Left ventricle myocardium inferior (tissue), 1 donor: ENCODE measurements at regions of chr19 and their contacts with region 1.

Region 1: DNA sequence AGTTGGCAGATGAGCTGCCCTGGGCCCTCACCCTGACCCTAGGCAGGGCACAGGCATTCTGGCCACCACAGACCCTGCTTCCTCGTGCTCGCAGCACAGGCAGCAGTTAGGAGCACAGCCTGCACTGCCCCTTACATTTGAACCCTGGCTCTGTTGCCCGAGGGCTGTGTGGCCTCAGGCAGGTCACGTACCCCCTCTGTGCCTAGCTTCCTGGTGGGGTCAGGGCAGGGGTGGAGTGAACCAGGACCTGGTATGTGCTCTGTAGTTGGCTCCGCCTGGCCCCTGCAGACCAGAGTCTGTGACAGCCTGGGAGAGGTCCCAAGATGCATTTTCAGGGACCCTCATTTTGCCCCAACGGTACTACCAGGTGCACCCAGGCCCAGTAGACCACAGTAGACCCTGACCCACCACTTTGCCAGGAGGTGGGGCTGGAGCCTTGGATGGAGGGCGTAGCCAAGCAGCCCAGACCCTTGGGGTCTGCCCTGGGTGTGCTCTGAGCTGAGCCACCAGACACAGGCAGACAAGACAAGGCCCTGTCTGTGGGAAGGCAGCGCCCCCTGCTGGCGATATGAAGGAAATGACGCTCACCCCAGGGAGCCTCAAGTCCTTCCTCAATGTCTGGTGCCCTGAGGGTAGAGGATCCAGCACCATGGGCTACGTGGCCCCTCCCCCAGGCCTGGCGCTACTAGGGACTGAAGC is 9.1 kb downstream of the LYL1 start:
- DNase-seq: peak; percentile 83
- H3K4me3 ChIP-seq: no peak overlapping the region
- H3K27ac ChIP-seq: peak overlapping the region; percentile 97
- H3K4me1 ChIP-seq: peaks cover 94% of the 10 kb centered on the region
- H3K27me3 ChIP-seq: no peaks in the 10 kb centered on the region
- CTCF ChIP-seq: peak; percentile 97

Region 2: GRCh38 chr19:12983542-12984142 is 109.9 kb before region 1 on chr19:
- intact Hi-C with region 1: loop called (anchors 5 kb)
- DNase-seq: peak; percentile 80
- H3K4me3 ChIP-seq: peak overlapping the region; percentile 58
- H3K27ac ChIP-seq: no peak overlapping the region
- H3K4me1 ChIP-seq: peaks cover 24% of the 10 kb centered on the region
- H3K27me3 ChIP-seq: no peaks in the 10 kb centered on the region
- CTCF ChIP-seq: peak; percentile 97